Head of caudate nucleus (tissue), 42 donors: ENCODE measurements at regions of chr18 and their contacts with region 1.

Region 1: DNA sequence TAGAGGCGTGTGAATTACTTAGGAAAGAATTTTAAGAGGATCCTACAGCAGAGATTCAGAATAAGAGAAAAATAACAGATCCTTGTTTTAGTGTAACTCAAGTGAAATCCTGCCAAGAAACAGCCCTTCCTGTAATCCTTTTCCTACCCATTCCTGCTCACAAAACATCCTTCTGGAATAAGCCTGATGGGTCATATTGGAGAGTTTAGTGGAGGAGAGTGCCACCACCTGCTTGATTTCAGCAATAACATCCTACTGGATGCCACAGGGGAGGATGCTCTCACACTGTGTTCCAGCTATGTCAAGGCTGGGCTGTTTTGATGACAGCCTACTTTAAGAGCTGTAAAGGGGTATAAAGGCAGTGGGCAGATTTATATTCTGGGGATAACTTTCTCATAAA is 54.8 kb upstream of the CCDC178 start:
- DNase-seq: peak in 35 of 42 donors; percentile 8 to 79 (median 44)

Region 2: DNA sequence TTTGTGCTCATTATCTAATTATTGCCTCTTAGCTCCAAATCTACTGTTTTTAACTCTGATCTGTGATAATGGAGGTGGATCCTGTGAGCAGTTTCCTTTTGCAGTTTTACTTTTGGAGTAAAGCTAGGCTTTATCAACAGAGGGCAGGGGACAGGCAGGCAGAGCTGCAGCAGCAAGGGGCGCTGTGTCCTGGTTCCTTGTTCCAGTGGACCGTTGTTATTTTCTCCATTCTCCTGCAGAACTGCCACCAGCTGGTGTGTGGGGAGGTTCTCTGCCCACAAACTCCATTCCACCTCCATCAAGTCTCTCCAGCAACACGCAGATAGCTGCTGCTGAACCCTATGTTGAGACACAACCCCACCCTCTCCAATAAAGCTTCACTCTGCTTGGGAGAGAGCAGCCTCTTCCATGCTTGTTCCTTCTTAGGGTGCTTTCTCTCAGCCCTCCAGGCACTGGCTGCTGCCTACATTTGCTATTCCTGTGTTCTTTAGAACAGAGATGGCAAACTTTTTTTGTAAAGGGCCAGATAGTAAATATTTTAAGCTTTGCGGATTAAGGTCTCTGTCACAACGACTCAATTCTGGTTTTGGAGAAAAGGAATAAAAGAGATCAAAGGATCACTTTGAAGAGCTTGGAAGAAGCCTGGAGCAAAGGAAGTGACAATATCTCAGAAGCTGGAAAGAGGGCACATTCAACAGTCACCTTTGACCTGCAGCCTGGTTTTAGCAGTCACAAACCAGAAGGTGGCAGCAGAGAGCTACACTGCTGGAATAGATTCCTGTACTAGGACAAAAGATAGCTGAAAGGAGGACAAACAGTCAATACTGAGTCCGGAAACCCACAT is 263.6 kb before region 1 on chr18:
- intact Hi-C with region 1: loop called (anchors 5 kb)
- DNase-seq: peak; percentile 40 to 92 (median 80)

Region 3: DNA sequence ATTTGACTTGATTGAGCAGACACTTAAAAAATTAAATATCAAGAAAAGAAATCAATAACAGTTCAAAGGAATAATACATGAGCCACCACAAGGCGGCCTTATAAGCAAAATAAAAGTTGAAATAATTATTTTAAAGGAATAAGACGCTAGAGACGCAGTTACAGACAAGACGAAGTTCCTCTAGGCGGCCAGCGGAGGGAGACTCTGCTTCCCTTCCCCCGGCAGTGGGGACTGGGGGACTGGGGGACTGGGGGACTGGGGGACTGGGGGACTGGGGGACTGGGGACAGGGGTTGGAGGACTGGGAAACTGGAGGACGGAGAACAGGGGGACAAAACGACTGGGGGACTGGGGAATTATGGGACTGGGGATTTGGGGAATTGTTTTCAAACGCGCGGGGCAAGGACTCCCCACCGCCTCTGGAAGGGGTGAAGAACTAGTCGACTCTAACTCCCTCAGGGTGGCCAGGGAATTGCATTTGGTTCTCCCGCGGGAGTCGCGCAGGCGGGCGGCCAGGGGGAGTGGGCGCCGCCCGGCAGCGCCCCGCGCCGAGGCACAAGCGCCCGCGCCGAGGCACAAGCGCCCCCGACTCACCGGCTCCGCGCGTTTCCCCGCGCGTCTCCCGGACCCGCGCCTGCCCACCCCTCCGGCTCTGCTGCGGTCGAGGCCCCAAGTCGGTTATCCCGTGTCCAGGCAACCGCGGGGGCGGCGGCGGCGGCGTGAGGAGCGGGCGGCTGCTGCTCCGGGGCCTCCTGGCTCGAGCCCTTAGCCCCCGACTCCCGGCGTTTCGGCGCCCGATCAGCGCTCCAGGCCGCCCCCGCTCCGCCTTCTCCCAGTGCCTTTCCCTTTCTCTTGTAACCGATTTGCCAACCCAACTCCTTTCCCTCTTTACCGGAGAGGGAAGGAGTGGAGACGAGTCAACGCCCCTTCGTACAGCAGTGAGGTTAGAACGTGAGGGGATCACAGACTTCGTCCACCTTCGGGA is 54.9 kb before region 1 on chr18 and contains the start of gene CCDC178:
- intact Hi-C with region 1: loop called (anchors 10 kb)
- DNase-seq: peak; percentile 21 to 86 (median 66)